ENCODE measurements at regions of chr1 and their contacts with region 1.

Region 1: GRCh38 chr1:58515794-58516401 is 30.6 kb downstream of the OMA1 start:
- DNase-seq: peak in 1 of 3 donors; percentile 58
- ATAC-seq: peak; percentile 80
- H3K4me3 ChIP-seq: no peak overlapping the region
- H3K4me1 ChIP-seq: no peaks in the 10 kb centered on the region
- CTCF ChIP-seq: peak; percentile 40

Region 2: GRCh38 chr1:58652651-58653184 is 136.8 kb after region 1 on chr1:
- intact Hi-C with region 1: loop called in 1 of 2 experiments (anchors 5 kb)
- DNase-seq: peak in 1 of 3 donors; percentile 82
- ATAC-seq: peak; percentile 95
- H3K4me3 ChIP-seq: no peak overlapping the region
- H3K4me1 ChIP-seq: no peaks in the 10 kb centered on the region
- CTCF ChIP-seq: peak; percentile 68

Measured in mucosa of descending colon (tissue), 3 donors.